Mammary epithelial cell (primary cell): ENCODE measurements at regions of chr5 and their contacts with region 1.

Region 1: GRCh38 chr5:134436523-134437339 is 25.1 kb upstream of the CDKN2AIPNL start:
- DNase-seq: peak; percentile 55
- H3K4me3 ChIP-seq: no peak overlapping the region
- H3K27ac ChIP-seq: peak overlapping the region; percentile 95
- H3K4me1 ChIP-seq: peaks cover 55% of the 10 kb centered on the region
- H3K27me3 ChIP-seq: no peaks in the 10 kb centered on the region
- CTCF ChIP-seq: no peak

Region 2: DNA sequence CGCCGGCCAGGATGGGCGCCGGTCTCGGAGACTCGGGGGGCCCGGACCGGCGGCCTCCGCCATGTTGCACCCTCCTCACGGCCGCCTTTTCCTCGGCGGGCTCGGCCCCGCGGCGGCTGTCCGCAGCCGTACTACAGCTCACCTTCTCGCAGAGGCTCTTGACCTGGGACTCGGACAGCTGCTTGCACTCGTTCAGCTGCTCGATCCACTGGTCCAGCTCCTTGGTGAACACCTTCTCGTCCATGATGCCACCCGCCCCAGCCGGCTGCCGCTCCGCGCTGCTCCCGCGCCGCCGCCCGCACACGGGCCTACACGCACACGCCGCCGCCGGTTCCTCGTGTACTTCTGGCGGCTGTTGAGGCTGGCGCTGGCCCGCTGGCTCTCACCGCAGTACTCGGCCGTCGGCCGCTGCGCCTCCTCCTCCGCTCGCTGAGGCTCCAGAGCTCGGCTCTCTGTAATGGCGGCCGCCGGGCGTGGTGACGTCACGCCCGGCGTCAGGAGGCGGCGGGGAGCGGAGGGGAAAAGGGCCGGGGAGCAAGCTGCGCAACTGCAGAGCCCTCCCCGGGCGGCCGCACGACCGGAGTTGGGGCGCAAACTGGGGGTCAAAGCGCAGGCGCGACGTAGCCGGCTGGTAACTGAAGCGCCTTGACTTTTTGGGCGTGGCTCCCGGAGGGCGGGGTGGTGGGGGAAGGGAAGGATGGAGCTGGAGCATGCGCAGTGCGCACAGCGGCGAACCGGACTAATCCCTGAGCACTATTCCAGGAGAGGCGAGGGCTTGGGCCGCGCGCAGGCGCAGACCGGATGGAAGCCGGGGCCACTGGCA is 210.9 kb before region 1 on chr5 and contains the start of gene PPP2CA:
- CTCF ChIA-PET with region 1: no interaction called
- dilution Hi-C with region 1: no loop called
- in situ Hi-C with region 1: no loop called
- intact Hi-C with region 1: loop called (anchors 5 kb)
- DNase-seq: peak; percentile 99
- H3K4me3 ChIP-seq: peak within 1 kb of the TSS; percentile 67 to 99 (median 98)
- H3K27ac ChIP-seq: peak within 1 kb of the TSS; percentile 98
- H3K4me1 ChIP-seq: peaks cover 13% of the 10 kb centered on the region
- H3K27me3 ChIP-seq: no peaks in the 10 kb centered on the region
- CTCF ChIP-seq: no peak
- total RNA-seq, gene PPP2CA: 80.7 to 170 TPM

Region 3: DNA sequence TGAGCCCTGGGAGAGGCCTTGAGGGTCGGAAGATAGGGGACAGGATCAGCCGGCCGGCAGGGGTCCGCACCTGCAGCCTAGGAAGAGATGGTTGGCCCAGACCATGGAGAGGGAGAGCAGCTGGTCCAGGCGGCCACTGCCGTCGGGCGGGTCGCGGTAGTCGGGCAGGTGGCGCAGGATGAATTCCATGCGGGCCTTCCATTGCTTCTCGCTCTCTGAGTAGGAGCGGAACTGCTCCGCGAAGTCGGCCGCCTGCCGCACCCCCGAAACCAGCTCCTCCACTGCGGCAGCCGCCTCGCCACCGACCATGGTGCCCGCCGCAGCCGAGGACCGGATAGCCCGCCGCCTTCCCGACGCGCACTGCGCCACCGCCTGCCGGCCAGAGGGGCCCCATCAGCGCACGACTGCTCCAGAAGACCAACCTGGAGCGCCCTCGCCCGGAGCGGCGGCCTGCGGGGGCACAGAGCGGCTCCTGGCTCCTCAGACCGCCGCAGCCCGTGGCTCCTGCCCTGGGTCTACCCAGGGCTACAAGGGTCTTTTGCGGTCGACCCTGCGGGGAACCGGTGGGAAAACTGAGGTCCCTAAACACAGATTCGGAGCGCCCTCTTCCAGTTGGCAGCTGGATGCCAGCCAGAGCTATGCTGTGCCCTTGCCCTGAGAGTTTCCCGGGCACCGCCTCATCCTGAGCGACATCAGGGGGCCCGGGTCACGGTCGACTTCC is 25.0 kb before region 1 on chr5 and contains the start of gene CDKN2AIPNL:
- CTCF ChIA-PET with region 1: interaction called, 5 read pairs
- dilution Hi-C with region 1: no loop called
- in situ Hi-C with region 1: no loop called
- intact Hi-C with region 1: loop called (anchors 1 kb)
- DNase-seq: peak; percentile 81
- H3K4me3 ChIP-seq: peak within 1 kb of the TSS; percentile 85 to 91 (median 87)
- H3K27ac ChIP-seq: peak within 1 kb of the TSS; percentile 28
- H3K4me1 ChIP-seq: peaks cover 22% of the 10 kb centered on the region
- H3K27me3 ChIP-seq: no peaks in the 10 kb centered on the region
- CTCF ChIP-seq: peak; percentile 35 to 77
- total RNA-seq, gene CDKN2AIPNL: 28.7 to 30.0 TPM

Region 4: GRCh38 chr5:134503088-134503946 is 66.6 kb after region 1 on chr5:
- CTCF ChIA-PET with region 1: no interaction called
- dilution Hi-C with region 1: no loop called
- in situ Hi-C with region 1: no loop called
- intact Hi-C with region 1: loop called (anchors 1 kb)
- DNase-seq: peak; percentile 99
- H3K4me3 ChIP-seq: no peak overlapping the region
- H3K27ac ChIP-seq: peak overlapping the region; percentile 65
- H3K4me1 ChIP-seq: peaks cover 44% of the 10 kb centered on the region
- H3K27me3 ChIP-seq: no peaks in the 10 kb centered on the region
- CTCF ChIP-seq: peak in 1 of 2 donors; percentile 3

Region 5: DNA sequence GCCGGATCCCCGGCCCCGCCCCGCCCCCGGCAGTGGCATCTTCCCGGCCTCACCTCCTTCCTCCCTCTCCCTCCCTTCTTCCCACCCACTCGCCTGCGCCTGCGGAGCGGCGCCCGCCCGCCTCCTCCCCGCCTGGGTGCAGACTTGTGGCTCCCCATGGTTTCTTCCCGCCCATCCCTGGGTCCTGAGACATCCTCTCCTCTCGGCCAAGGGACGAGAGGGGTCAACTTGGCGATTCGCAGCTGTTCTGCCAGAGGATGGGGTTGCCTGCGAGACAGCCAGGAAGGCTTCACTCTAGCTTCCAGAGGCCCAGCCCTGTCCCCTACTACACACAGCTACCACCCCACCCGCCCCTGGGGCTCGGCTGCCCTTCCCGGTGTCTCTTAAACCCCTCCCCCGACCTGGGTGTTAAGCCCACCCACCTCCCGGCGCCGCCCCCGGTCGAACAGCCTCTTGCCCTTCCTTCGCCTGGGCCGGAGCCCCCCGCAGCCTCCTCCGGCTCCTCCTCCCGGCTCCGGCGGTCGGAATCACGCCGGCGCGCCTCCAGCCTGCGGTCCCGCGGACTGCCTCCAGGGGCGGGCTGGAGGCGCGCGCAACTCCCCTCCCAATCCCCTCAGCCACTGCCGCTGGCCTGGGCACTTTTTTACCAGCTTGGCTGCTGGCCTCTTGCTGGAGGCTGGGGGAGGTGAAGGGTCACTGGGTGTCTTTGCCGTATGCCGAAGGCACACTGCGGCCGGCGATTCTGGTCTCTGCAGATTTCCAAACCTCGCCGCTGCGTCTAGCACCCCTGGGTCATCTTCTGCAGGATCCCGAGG is 90.6 kb after region 1 on chr5:
- CTCF ChIA-PET with region 1: interaction called, 14 read pairs
- dilution Hi-C with region 1: no loop called
- in situ Hi-C with region 1: no loop called
- intact Hi-C with region 1: loop called (anchors 1 kb)
- DNase-seq: peak; percentile 91
- H3K4me3 ChIP-seq: peak overlapping the region; percentile 87 to 96 (median 91)
- H3K27ac ChIP-seq: peak overlapping the region; percentile 35
- H3K4me1 ChIP-seq: peaks cover 17% of the 10 kb centered on the region
- H3K27me3 ChIP-seq: no peaks in the 10 kb centered on the region
- CTCF ChIP-seq: peak; percentile 49 to 84